ENCODE measurements at regions of chr9 and their contacts with region 1.

Region 1: GRCh38 chr9:127555768-127556397 is 56.2 kb upstream of the STXBP1 start:
- DNase-seq: no peak
- ATAC-seq: peak; percentile 33; the same call in 1 of the 2 replicates
- H3K4me3 Mint-ChIP-seq: no peak overlapping the region
- H3K27ac Mint-ChIP-seq: peak overlapping the region; percentile 74
- H3K4me1 Mint-ChIP-seq: peaks cover 41% of the 10 kb centered on the region
- H3K27me3 Mint-ChIP-seq: peaks cover 2% of the 10 kb centered on the region; the same call in 1 of the 2 replicates
- CTCF ChIP-seq: no peak

Region 2: GRCh38 chr9:127347831-127348779 is 207.8 kb before region 1 on chr9:
- CTCF ChIA-PET with region 1: no interaction called
- POLR2A ChIA-PET with region 1: no interaction called
- DNase-seq: no peak
- ATAC-seq: peak; percentile 87
- H3K4me3 Mint-ChIP-seq: no peak overlapping the region
- H3K27ac Mint-ChIP-seq: peak overlapping the region; percentile 64; the same call in 1 of the 2 replicates
- H3K4me1 Mint-ChIP-seq: peaks cover 19% of the 10 kb centered on the region
- H3K27me3 Mint-ChIP-seq: no peaks in the 10 kb centered on the region
- CTCF ChIP-seq: no peak

Region 3: DNA sequence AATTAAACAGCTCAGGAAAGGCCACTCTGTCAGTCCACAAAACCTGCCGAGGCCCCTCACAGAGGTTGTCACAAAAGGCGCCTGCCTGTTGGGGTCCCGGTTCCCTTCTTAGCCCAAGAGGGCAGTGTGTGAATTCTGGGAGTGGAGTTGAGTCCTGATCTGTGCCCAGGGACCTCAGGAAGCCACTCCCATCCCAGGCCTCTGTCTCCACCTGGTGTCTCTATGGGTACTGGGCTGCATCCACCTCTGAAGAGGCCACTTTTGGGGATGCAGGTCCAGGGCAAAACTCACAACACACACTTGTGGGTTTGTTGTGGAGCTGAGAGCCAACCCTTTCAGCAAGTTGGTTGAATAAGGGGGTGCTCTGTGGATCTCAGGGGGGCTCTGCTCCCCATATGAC is 18.1 kb before region 1 on chr9:
- CTCF ChIA-PET with region 1: interaction called, 18 read pairs
- POLR2A ChIA-PET with region 1: interaction called, 3 read pairs
- DNase-seq: peak; percentile 48
- ATAC-seq: peak; percentile 87
- H3K4me3 Mint-ChIP-seq: no peak overlapping the region
- H3K27ac Mint-ChIP-seq: no peak overlapping the region
- H3K4me1 Mint-ChIP-seq: peaks cover 15% of the 10 kb centered on the region
- H3K27me3 Mint-ChIP-seq: no peaks in the 10 kb centered on the region
- CTCF ChIP-seq: no peak

Region 4: GRCh38 chr9:127568971-127569885 is 13.3 kb after region 1 on chr9:
- CTCF ChIA-PET with region 1: interaction called, 13 read pairs
- POLR2A ChIA-PET with region 1: interaction called, 4 read pairs
- DNase-seq: peak; percentile 77
- ATAC-seq: peak; percentile 79
- H3K4me3 Mint-ChIP-seq: peak overlapping the region; percentile 71
- H3K27ac Mint-ChIP-seq: no peak overlapping the region
- H3K4me1 Mint-ChIP-seq: peaks cover 26% of the 10 kb centered on the region
- H3K27me3 Mint-ChIP-seq: peaks cover 10% of the 10 kb centered on the region
- CTCF ChIP-seq: no peak

Region 5: GRCh38 chr9:127785933-127786772 is 230.3 kb after region 1 on chr9 and contains the start of gene CDK9:
- CTCF ChIA-PET with region 1: no interaction called
- POLR2A ChIA-PET with region 1: no interaction called
- DNase-seq: peak; percentile 93
- ATAC-seq: peak; percentile 64
- H3K4me3 Mint-ChIP-seq: peak within 1 kb of the TSS; percentile 97
- H3K27ac Mint-ChIP-seq: peak within 1 kb of the TSS; percentile 93
- H3K4me1 Mint-ChIP-seq: peaks cover 20% of the 10 kb centered on the region
- H3K27me3 Mint-ChIP-seq: no peaks in the 10 kb centered on the region
- CTCF ChIP-seq: no peak
- total RNA-seq, gene CDK9: 106 to 111 TPM (median 107 TPM) in 3 replicates